CD4-positive, alpha-beta T cell (primary cell): ENCODE measurements at regions of chr13 and their contacts with region 1.

Region 1: GRCh38 chr13:99067160-99067985 is 89.5 kb upstream of the DOCK9 start:
- DNase-seq: no peak
- ATAC-seq: no peak
- H3K4me3 ChIP-seq: no peak overlapping the region
- H3K4me3 Mint-ChIP-seq: peak overlapping the region; percentile 30
- H3K27ac ChIP-seq: no peak overlapping the region
- H3K27ac Mint-ChIP-seq: peak overlapping the region; percentile 12
- H3K4me1 ChIP-seq: peaks cover 41% of the 10 kb centered on the region
- H3K4me1 Mint-ChIP-seq: peaks cover 92% of the 10 kb centered on the region
- H3K27me3 ChIP-seq: no peaks in the 10 kb centered on the region
- H3K27me3 Mint-ChIP-seq: no peaks in the 10 kb centered on the region
- CTCF ChIP-seq: no peak

Region 2: DNA sequence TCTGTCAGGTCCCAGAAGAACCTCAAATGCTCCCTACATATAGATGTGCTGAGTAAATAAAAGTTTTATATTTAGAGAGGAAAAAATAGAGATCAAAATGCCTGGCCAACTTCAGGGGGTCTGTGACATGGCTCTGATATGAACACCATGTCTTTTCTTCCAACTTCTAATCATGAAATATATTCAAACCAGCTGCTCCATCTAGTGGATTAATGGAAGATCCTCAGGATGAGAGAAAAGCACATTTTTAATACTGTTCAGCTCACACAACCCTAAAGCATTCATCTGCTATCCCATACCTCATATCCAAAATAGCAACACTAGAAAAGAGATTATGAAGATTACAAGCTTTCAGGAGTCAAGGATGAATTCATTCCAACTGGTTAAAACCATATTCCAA is 33.6 kb before region 1 on chr13:
- CTCF ChIA-PET with region 1: no interaction called
- POLR2A ChIA-PET with region 1: no interaction called
- intact Hi-C with region 1: no loop called
- DNase-seq: peak in 3 of 14 experiments; percentile 39 to 53 (median 42)
- ATAC-seq: peak; percentile 70
- H3K4me3 ChIP-seq: no peak overlapping the region
- H3K4me3 Mint-ChIP-seq: no peak overlapping the region
- H3K27ac ChIP-seq: no peak overlapping the region
- H3K27ac Mint-ChIP-seq: peak overlapping the region; percentile 6
- H3K4me1 ChIP-seq: peaks cover 4% of the 10 kb centered on the region
- H3K4me1 Mint-ChIP-seq: peaks cover 51% of the 10 kb centered on the region
- H3K27me3 ChIP-seq: no peaks in the 10 kb centered on the region
- H3K27me3 Mint-ChIP-seq: no peaks in the 10 kb centered on the region
- CTCF ChIP-seq: peak; percentile 58

Region 3: GRCh38 chr13:99046851-99047250 is 20.5 kb before region 1 on chr13:
- CTCF ChIA-PET with region 1: interaction called, 4 read pairs
- POLR2A ChIA-PET with region 1: interaction called, 15 read pairs
- intact Hi-C with region 1: loop called in 1 of 2 experiments (anchors 2 kb)
- DNase-seq: no peak
- ATAC-seq: no peak
- H3K4me3 ChIP-seq: peak overlapping the region; percentile 34
- H3K4me3 Mint-ChIP-seq: peak overlapping the region; percentile 75
- H3K27ac ChIP-seq: peak overlapping the region; percentile 75 to 78
- H3K27ac Mint-ChIP-seq: peak overlapping the region; percentile 95
- H3K4me1 ChIP-seq: peaks cover 93% of the 10 kb centered on the region
- H3K4me1 Mint-ChIP-seq: peaks cover 95% of the 10 kb centered on the region
- H3K27me3 ChIP-seq: no peaks in the 10 kb centered on the region
- H3K27me3 Mint-ChIP-seq: no peaks in the 10 kb centered on the region
- CTCF ChIP-seq: no peak

Region 4: GRCh38 chr13:99051768-99052455 is 15.5 kb before region 1 on chr13:
- CTCF ChIA-PET with region 1: interaction called, 4 read pairs
- POLR2A ChIA-PET with region 1: interaction called, 15 read pairs
- intact Hi-C with region 1: loop called in 1 of 2 experiments (anchors 2 kb)
- DNase-seq: peak in 3 of 14 experiments; percentile 60 to 76 (median 68)
- ATAC-seq: peak; percentile 48
- H3K4me3 ChIP-seq: peak overlapping the region; percentile 21
- H3K4me3 Mint-ChIP-seq: peak overlapping the region; percentile 79
- H3K27ac ChIP-seq: peak overlapping the region; percentile 49 to 50
- H3K27ac Mint-ChIP-seq: peak overlapping the region; percentile 95
- H3K4me1 ChIP-seq: peaks cover 86% of the 10 kb centered on the region
- H3K4me1 Mint-ChIP-seq: peaks cover 91% of the 10 kb centered on the region
- H3K27me3 ChIP-seq: no peaks in the 10 kb centered on the region
- H3K27me3 Mint-ChIP-seq: no peaks in the 10 kb centered on the region
- CTCF ChIP-seq: no peak

Region 5: DNA sequence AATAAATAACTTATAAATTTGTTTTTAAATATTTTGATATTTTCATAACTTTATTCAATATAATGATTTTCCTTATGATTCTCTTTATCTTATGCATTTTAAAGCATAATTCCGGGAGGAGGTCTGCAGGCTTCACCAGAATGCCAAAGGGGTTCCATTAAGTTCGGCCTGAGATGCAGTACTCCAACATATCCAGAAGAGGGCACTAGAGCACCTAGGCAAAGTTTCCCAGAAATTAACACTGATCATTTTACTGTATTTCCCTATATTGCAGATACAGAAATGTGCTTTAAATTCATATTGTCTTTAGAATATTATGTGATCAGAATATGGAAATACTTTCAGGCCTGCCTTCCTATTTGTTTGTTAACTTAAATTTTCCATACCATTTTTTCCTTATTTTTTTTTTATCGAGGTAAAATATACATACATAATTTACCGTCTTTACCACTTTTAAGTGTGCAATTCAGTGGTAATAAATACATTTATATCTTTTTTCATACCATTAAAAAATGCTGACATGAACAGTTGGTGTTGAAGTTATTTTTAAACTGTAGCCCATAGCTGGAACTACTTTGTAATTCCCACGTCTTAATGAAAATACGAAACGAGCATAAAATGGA is 375.0 kb after region 1 on chr13:
- CTCF ChIA-PET with region 1: no interaction called
- POLR2A ChIA-PET with region 1: no interaction called
- intact Hi-C with region 1: no loop called
- DNase-seq: peak in 10 of 14 experiments; percentile 41 to 82 (median 49)
- ATAC-seq: peak; percentile 80
- H3K4me3 ChIP-seq: no peak overlapping the region
- H3K4me3 Mint-ChIP-seq: no peak overlapping the region
- H3K27ac ChIP-seq: no peak overlapping the region
- H3K27ac Mint-ChIP-seq: no peak overlapping the region
- H3K4me1 ChIP-seq: peaks cover 2% of the 10 kb centered on the region
- H3K4me1 Mint-ChIP-seq: peaks cover 15% of the 10 kb centered on the region
- H3K27me3 ChIP-seq: no peaks in the 10 kb centered on the region
- H3K27me3 Mint-ChIP-seq: no peaks in the 10 kb centered on the region
- CTCF ChIP-seq: peak; percentile 100

Region 6: GRCh38 chr13:99702687-99703319 is 635.4 kb after region 1 on chr13:
- CTCF ChIA-PET with region 1: no interaction called
- POLR2A ChIA-PET with region 1: no interaction called
- intact Hi-C with region 1: no loop called
- DNase-seq: no peak
- ATAC-seq: no peak
- H3K4me3 ChIP-seq: no peak overlapping the region
- H3K4me3 Mint-ChIP-seq: no peak overlapping the region
- H3K27ac ChIP-seq: no peak overlapping the region
- H3K27ac Mint-ChIP-seq: no peak overlapping the region
- H3K4me1 ChIP-seq: no peaks in the 10 kb centered on the region
- H3K4me1 Mint-ChIP-seq: no peaks in the 10 kb centered on the region
- H3K27me3 ChIP-seq: no peaks in the 10 kb centered on the region
- H3K27me3 Mint-ChIP-seq: no peaks in the 10 kb centered on the region
- CTCF ChIP-seq: no peak